Panc1 (cell line): ENCODE measurements at regions of chr5 and their contacts with region 1.

Region 1: DNA sequence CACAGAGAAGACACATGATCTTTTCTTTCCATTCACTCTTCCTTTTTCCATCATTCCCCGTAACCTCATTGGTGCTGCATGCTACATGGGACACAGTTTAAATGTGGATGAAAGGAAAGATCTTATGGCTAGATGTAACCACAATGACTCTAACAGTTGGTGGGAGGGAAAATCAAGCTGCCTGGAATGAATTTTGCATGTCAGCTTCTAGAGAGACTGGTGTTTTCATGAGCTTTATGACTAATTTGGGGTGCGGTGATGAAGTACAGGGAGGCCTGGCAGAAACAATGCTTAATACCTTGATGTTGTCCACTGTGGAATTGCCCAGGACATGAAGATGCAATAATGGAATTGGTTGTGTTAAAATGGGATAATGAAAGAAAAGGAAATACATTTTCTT is 55.9 kb upstream of the MYO10 start:
- DNase-seq: no peak
- ATAC-seq: peak; percentile 47
- H3K4me3 ChIP-seq: no peak overlapping the region
- H3K27ac ChIP-seq: no peak overlapping the region
- H3K4me1 ChIP-seq: peaks cover 15% of the 10 kb centered on the region
- H3K27me3 ChIP-seq: no peaks in the 10 kb centered on the region
- CTCF ChIP-seq: no peak

Region 2: GRCh38 chr5:16437974-16438373 is 554.0 kb before region 1 on chr5:
- CTCF ChIA-PET with region 1: no interaction called
- POLR2A ChIA-PET with region 1: no interaction called
- in situ Hi-C with region 1: no loop called
- intact Hi-C with region 1: no loop called
- DNase-seq: peak; percentile 20
- ATAC-seq: no peak
- H3K4me3 ChIP-seq: no peak overlapping the region
- H3K27ac ChIP-seq: no peak overlapping the region
- H3K4me1 ChIP-seq: no peaks in the 10 kb centered on the region
- H3K27me3 ChIP-seq: peaks cover 11% of the 10 kb centered on the region
- CTCF ChIP-seq: peak; percentile 30; the same call in 1 of the 2 replicates

Region 3: DNA sequence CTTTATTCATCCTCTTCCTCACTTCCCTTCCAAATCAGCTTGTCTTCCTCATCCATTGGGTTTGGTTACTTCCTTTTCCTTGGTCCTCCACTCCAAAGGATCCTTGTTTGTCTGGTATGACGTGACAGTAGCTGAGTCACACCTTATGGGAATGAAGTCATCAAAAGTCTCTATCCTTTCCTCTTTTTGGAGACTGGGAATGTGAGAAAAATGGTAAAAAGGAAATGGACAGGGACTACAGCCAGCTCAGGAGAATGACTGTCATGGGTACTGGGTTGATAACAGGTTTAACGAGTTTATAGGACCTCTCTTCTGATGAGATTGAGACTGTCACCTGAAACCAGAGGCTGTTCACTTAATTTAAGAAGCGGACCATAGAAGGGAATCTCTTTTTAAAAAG is 20.3 kb after region 1 on chr5:
- CTCF ChIA-PET with region 1: no interaction called
- POLR2A ChIA-PET with region 1: no interaction called
- in situ Hi-C with region 1: no loop called
- intact Hi-C with region 1: loop called (anchors 1 kb)
- DNase-seq: no peak
- ATAC-seq: 0 out of 2 replicates have a peak, but pooled peaks have one; percentile 45
- H3K4me3 ChIP-seq: no peak overlapping the region
- H3K27ac ChIP-seq: no peak overlapping the region
- H3K4me1 ChIP-seq: no peaks in the 10 kb centered on the region
- H3K27me3 ChIP-seq: no peaks in the 10 kb centered on the region
- CTCF ChIP-seq: no peak

Region 4: DNA sequence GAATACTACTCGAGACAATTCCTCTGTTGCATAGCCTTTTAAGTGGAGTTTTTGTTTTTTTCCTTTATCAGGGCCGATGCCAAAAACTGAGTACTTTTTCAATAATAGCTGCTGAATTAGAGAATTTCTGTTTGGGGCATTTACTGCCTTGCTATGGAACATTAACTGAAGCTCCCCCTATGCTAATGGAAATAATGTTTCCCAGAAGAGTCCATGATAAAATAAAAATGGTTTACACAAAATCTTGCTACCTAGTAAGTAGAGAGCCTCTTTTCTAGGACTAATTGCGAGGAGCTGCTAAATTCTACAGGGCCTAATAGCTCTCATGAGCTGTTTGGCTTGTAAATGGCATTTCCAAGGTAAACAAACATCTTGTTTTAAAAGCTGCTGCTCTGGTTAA is 72.2 kb after region 1 on chr5:
- CTCF ChIA-PET with region 1: no interaction called
- POLR2A ChIA-PET with region 1: interaction called, 13 read pairs
- in situ Hi-C with region 1: no loop called
- intact Hi-C with region 1: no loop called
- DNase-seq: no peak
- ATAC-seq: no peak
- H3K4me3 ChIP-seq: no peak overlapping the region
- H3K27ac ChIP-seq: no peak overlapping the region
- H3K4me1 ChIP-seq: peaks cover 3% of the 10 kb centered on the region; the same call in 1 of the 2 replicates
- H3K27me3 ChIP-seq: no peaks in the 10 kb centered on the region
- CTCF ChIP-seq: no peak

Region 5: GRCh38 chr5:17157916-17158529 is 166.0 kb after region 1 on chr5:
- CTCF ChIA-PET with region 1: no interaction called
- POLR2A ChIA-PET with region 1: no interaction called
- in situ Hi-C with region 1: no loop called
- intact Hi-C with region 1: no loop called
- DNase-seq: no peak
- ATAC-seq: no peak
- H3K4me3 ChIP-seq: no peak overlapping the region
- H3K27ac ChIP-seq: no peak overlapping the region
- H3K4me1 ChIP-seq: no peaks in the 10 kb centered on the region
- H3K27me3 ChIP-seq: no peaks in the 10 kb centered on the region
- CTCF ChIP-seq: no peak